ENCODE measurements at regions of chr11 and their contacts with region 1.

Region 1: GRCh38 chr11:69931994-69932910 is 113.0 kb upstream of the FGF3 start:
- DNase-seq: peak; percentile 59 to 72
- H3K4me3 ChIP-seq: no peak overlapping the region
- H3K4me3 Mint-ChIP-seq: peak overlapping the region; percentile 5
- H3K27ac Mint-ChIP-seq: peak overlapping the region; percentile 23
- H3K4me1 ChIP-seq: peaks cover 38% of the 10 kb centered on the region
- H3K4me1 Mint-ChIP-seq: peaks cover 41% of the 10 kb centered on the region
- H3K27me3 ChIP-seq: no peaks in the 10 kb centered on the region
- H3K27me3 Mint-ChIP-seq: no peaks in the 10 kb centered on the region
- CTCF ChIP-seq: no peak

Region 2: DNA sequence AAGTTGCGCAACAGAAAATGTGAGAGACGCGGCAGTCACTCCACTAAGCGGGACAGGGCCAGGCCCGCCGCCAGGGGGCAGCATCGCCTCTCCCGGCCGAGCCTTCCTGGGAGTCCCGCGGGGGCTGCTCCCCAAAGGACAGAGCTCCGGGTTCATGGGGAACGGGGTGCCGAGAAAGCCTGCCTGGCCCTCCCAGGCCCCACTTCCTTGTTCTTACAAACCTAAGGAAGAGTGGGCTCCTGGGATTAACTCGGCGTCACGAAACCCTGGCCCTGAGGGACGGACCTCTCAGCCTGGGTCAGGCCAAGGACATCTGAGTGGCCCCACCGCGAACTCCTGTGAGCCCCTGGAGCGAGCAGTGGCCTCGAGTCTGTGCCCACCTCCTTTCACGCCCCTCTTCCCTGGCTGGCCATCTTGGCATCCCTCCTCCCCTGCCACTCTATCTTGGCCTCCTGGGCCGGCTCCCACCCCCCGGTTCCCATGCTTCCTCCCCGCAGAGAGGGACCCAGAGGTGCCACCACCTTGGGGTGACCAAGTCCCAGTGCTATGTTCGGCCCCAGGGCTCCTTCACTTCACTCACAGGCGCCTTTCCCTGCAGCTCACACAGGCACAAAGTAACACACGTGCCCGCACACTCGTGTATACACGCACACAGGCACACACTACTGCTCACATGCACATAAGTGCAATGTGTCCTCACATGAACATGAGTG is 13.2 kb before region 1 on chr11:
- CTCF ChIA-PET with region 1: interaction called, 8 read pairs
- POLR2A ChIA-PET with region 1: no interaction called
- intact Hi-C with region 1: loop called (anchors 1 kb)
- DNase-seq: peak; percentile 86 to 95
- H3K4me3 ChIP-seq: no peak overlapping the region
- H3K4me3 Mint-ChIP-seq: no peak overlapping the region
- H3K27ac Mint-ChIP-seq: peak overlapping the region; percentile 54
- H3K4me1 ChIP-seq: peaks cover 28% of the 10 kb centered on the region
- H3K4me1 Mint-ChIP-seq: peaks cover 6% of the 10 kb centered on the region
- H3K27me3 ChIP-seq: no peaks in the 10 kb centered on the region
- H3K27me3 Mint-ChIP-seq: peaks cover 10% of the 10 kb centered on the region
- CTCF ChIP-seq: peak; percentile 99

Region 3: DNA sequence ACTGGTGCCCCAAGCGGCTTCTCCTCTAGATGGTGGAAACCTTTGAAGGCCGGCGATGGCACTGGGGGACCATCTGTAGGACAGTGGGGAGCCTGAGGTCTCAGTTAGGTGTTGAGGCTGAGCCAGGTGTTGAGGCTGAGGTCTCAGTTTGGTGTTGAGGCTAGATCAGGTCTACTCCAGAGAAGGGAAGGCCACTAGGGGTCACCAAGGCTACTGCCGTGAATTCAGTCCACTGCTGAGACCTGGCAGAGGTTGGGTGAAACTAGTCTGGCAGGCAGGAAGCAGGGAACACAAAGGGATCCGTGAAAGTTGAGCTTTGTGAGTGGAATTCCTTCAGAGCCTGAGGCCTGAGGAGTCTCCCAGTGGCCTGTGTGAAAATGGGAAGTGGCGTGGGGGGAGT is 10.8 kb after region 1 on chr11:
- CTCF ChIA-PET with region 1: interaction called, 5 read pairs
- POLR2A ChIA-PET with region 1: no interaction called
- intact Hi-C with region 1: loop called (anchors 2 kb)
- DNase-seq: peak; percentile 82 to 83
- H3K4me3 ChIP-seq: no peak overlapping the region
- H3K4me3 Mint-ChIP-seq: no peak overlapping the region
- H3K27ac Mint-ChIP-seq: peak overlapping the region; percentile 22
- H3K4me1 ChIP-seq: peaks cover 32% of the 10 kb centered on the region
- H3K4me1 Mint-ChIP-seq: peaks cover 24% of the 10 kb centered on the region
- H3K27me3 ChIP-seq: no peaks in the 10 kb centered on the region
- H3K27me3 Mint-ChIP-seq: no peaks in the 10 kb centered on the region
- CTCF ChIP-seq: peak; percentile 71 to 91

Region 4: DNA sequence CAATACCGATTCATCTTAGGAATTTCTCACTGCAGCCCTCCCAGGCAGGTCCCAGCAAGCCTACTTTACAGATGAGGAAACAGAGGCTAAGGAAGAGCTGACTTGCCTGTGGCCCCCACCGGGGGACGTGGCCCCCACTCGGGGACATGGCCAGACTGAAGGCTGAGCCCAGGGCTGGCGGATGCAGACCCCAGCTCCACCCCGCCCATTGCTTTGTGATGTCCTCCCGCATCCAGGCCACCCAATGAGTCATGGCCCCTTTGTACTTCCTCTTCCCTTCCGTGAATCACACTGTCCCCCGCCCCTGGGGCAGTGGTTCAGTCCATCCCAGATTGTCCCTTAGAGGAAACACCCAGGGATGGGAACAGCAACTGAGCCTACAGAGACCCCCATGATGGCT is 29.9 kb after region 1 on chr11:
- CTCF ChIA-PET with region 1: no interaction called
- POLR2A ChIA-PET with region 1: no interaction called
- intact Hi-C with region 1: loop called (anchors 1 kb)
- DNase-seq: no peak
- H3K4me3 ChIP-seq: no peak overlapping the region
- H3K4me3 Mint-ChIP-seq: no peak overlapping the region
- H3K27ac Mint-ChIP-seq: no peak overlapping the region
- H3K4me1 ChIP-seq: peaks cover 20% of the 10 kb centered on the region
- H3K4me1 Mint-ChIP-seq: peaks cover 27% of the 10 kb centered on the region
- H3K27me3 ChIP-seq: no peaks in the 10 kb centered on the region
- H3K27me3 Mint-ChIP-seq: no peaks in the 10 kb centered on the region
- CTCF ChIP-seq: no peak

Measured in Caco-2 (cell line).